H1 (cell line): ENCODE measurements at regions of chr22 and their contacts with region 1.

Region 1: DNA sequence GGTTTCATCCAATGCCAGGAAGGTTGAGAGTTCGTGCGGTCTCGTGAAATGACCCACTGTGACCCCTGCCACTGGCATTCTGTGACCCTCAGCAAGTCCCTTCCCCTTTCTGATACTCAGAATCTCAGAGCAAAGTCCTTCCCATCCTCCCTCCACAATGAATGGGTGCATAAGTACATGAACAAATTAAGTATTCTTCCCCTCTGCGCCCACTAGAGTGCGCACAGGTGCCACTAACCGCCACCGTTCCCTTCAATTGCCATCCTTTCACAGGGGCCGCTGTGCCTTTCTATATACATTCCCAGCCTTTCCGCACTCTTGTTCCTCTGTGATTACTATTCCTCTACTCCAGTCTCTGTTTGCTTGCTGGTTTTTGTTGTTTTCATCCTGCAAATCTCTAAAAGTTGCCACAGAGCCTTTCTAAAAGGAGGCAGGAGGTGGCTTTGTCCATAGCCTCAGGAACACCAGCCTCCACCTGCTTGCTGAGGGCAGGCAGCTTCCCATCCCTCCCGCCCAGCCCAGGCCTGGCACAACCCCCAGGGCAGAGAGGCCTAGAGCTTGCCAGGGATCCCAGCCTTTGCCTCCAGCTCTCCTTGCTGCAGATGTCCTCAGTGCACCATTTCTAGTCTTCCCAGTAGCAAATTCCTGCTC is 6.7 kb upstream of the AP1B1 start:
- DNase-seq: peak; percentile 36 to 75
- H3K4me3 ChIP-seq: no peak overlapping the region
- H3K27ac ChIP-seq: no peak overlapping the region
- H3K4me1 ChIP-seq: no peaks in the 10 kb centered on the region
- H3K27me3 ChIP-seq: no peaks in the 10 kb centered on the region
- CTCF ChIP-seq: peak; percentile 84 to 97 (median 93)
- EP300 ChIP-seq: no peak
- POLR2A ChIP-seq: no peak
- RAD21 ChIP-seq: peak; percentile 97

Region 2: GRCh38 chr22:29344137-29344536 is 50.9 kb before region 1 on chr22:
- CTCF ChIA-PET with region 1: no interaction called
- POLR2A ChIA-PET with region 1: no interaction called
- DNase-seq: no peak
- H3K4me3 ChIP-seq: no peak overlapping the region
- H3K27ac ChIP-seq: no peak overlapping the region
- H3K4me1 ChIP-seq: no peaks in the 10 kb centered on the region
- H3K27me3 ChIP-seq: no peaks in the 10 kb centered on the region
- CTCF ChIP-seq: no peak
- EP300 ChIP-seq: no peak
- POLR2A ChIP-seq: no peak
- RAD21 ChIP-seq: no peak

Region 3: GRCh38 chr22:29434281-29434680 is 39.2 kb after region 1 on chr22:
- CTCF ChIA-PET with region 1: no interaction called
- POLR2A ChIA-PET with region 1: no interaction called
- DNase-seq: no peak
- H3K4me3 ChIP-seq: no peak overlapping the region
- H3K27ac ChIP-seq: no peak overlapping the region
- H3K4me1 ChIP-seq: peaks cover 0 to 4% (median 0%) of the 10 kb centered on the region in 4 experiments; a peak in 1 of 7 replicates
- H3K27me3 ChIP-seq: no peaks in the 10 kb centered on the region
- CTCF ChIP-seq: no peak
- EP300 ChIP-seq: no peak
- POLR2A ChIP-seq: no peak
- RAD21 ChIP-seq: no peak

Region 4: DNA sequence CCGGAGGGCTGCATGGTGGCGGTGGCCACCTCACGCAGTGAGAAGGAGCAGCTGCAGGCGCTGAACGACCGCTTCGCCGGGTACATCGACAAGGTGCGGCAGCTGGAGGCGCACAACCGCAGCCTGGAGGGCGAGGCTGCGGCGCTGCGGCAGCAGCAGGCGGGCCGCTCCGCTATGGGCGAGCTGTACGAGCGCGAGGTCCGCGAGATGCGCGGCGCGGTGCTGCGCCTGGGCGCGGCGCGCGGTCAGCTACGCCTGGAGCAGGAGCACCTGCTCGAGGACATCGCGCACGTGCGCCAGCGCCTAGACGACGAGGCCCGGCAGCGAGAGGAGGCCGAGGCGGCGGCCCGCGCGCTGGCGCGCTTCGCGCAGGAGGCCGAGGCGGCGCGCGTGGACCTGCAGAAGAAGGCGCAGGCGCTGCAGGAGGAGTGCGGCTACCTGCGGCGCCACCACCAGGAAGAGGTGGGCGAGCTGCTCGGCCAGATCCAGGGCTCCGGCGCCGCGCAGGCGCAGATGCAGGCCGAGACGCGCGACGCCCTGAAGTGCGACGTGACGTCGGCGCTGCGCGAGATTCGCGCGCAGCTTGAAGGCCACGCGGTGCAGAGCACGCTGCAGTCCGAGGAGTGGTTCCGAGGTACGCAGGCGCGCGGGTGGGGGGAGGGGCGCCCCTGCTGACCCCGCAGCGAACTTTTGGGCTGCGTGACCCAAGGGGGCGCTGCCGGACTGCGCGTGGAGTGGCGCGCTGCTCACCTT is 85.6 kb after region 1 on chr22:
- CTCF ChIA-PET with region 1: interaction called, 17 read pairs
- POLR2A ChIA-PET with region 1: interaction called, 3 read pairs
- DNase-seq: peak in 1 of 2 experiments; percentile 81
- H3K4me3 ChIP-seq: peak overlapping the region; percentile 26 to 57 (median 32)
- H3K27ac ChIP-seq: no peak overlapping the region
- H3K4me1 ChIP-seq: peaks cover 14 to 27% (median 20%) of the 10 kb centered on the region in 4 experiments
- H3K27me3 ChIP-seq: peaks cover 26 to 58% (median 51%) of the 10 kb centered on the region in 4 experiments
- CTCF ChIP-seq: peak; percentile 26 to 46 (median 40)
- EP300 ChIP-seq: no peak
- POLR2A ChIP-seq: no peak
- RAD21 ChIP-seq: peak; percentile 35 to 53

Region 5: GRCh38 chr22:29491012-29491411 is 96.0 kb after region 1 on chr22:
- CTCF ChIA-PET with region 1: interaction called, 11 read pairs
- POLR2A ChIA-PET with region 1: no interaction called
- DNase-seq: no peak
- H3K4me3 ChIP-seq: no peak overlapping the region
- H3K27ac ChIP-seq: no peak overlapping the region
- H3K4me1 ChIP-seq: no peaks in the 10 kb centered on the region
- H3K27me3 ChIP-seq: no peaks in the 10 kb centered on the region
- CTCF ChIP-seq: no peak
- EP300 ChIP-seq: no peak
- POLR2A ChIP-seq: no peak
- RAD21 ChIP-seq: no peak

Region 6: DNA sequence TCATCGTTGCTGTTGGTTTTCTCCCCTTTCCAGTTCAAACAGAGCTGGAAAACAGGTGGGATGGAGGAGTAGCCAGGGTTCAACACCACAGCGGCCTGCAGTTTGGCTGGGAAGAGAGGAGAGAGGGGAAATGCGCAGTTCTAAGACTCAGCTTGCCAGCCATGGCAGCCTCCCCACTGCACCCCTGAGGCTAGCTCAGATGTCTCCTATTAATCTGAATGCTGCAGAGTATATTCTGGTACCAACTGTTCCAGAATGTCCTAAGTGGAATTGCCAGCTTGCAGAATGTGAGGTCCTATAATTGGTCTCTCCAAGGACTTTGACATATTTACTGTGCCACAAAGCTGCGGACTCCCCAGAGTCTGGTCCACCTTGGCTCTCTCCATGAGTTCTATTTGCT is 117.0 kb after region 1 on chr22:
- CTCF ChIA-PET with region 1: interaction called, 14 read pairs
- POLR2A ChIA-PET with region 1: no interaction called
- DNase-seq: no peak
- H3K4me3 ChIP-seq: no peak overlapping the region
- H3K27ac ChIP-seq: no peak overlapping the region
- H3K4me1 ChIP-seq: no peaks in the 10 kb centered on the region
- H3K27me3 ChIP-seq: no peaks in the 10 kb centered on the region
- CTCF ChIP-seq: no peak
- EP300 ChIP-seq: no peak
- POLR2A ChIP-seq: no peak
- RAD21 ChIP-seq: no peak